Heart right ventricle (tissue), 16 donors: ENCODE measurements at regions of chr9 and their contacts with region 1.

Region 1: DNA sequence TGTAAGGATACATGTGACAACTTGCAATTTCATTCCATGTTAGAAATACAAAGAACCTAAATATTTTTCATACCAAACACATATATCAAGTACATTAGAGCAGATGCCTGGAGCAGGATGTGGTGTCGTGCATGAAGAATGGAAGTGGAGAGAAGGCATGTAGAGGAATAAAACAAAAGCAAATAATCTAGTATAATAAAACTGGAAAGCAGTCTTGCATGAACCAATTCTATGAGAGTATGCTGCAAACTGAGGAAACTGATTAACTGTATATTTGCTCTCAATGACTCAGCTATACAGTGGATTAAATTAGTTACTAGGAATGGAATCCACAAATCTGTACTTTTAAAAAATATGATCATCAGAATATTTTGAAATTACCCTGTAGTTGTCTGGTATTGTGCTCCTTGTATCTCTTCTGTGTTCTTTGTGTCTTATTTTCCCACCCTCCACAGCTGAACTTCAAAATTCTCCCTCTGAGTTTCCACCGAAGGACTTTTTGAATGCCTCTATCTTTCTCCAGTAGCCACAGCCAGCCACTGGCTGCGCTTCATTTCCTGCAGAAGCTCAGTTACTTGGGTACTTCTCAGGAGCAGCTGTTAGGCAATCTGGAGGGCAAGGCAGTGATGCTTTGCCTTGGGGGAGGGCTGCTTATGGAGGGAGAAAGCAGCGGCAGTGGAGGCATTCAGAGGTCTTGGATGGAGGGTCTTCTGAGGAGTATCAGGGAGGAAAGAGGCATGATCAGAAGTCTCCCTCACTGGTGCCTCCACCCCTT is 608.0 kb downstream of the BRINP1 start:
- DNase-seq: no peak
- ATAC-seq: no peak
- H3K4me3 ChIP-seq: no peak overlapping the region
- H3K27ac ChIP-seq: no peak overlapping the region
- H3K4me1 ChIP-seq: no peaks in the 10 kb centered on the region
- H3K27me3 ChIP-seq: no peaks in the 10 kb centered on the region
- CTCF ChIP-seq: no peak

Region 2: GRCh38 chr9:117092582-117092981 is 1668.6 kb before region 1 on chr9:
- intact Hi-C with region 1: loop called in 1 of 10 experiments (anchors 10 kb)
- DNase-seq: no peak
- ATAC-seq: no peak
- H3K4me3 ChIP-seq: no peak overlapping the region
- H3K27ac ChIP-seq: no peak overlapping the region
- H3K4me1 ChIP-seq: peaks cover 0 to 6% (median 0%) of the 10 kb centered on the region in 9 donors
- H3K27me3 ChIP-seq: no peaks in the 10 kb centered on the region
- CTCF ChIP-seq: no peak

Region 3: GRCh38 chr9:118586978-118587377 is 174.2 kb before region 1 on chr9:
- intact Hi-C with region 1: no loop called
- DNase-seq: no peak
- ATAC-seq: no peak
- H3K4me3 ChIP-seq: no peak overlapping the region
- H3K27ac ChIP-seq: no peak overlapping the region
- H3K4me1 ChIP-seq: no peaks in the 10 kb centered on the region
- H3K27me3 ChIP-seq: peaks cover 0 to 3% (median 0%) of the 10 kb centered on the region in 7 donors
- CTCF ChIP-seq: no peak

Region 4: DNA sequence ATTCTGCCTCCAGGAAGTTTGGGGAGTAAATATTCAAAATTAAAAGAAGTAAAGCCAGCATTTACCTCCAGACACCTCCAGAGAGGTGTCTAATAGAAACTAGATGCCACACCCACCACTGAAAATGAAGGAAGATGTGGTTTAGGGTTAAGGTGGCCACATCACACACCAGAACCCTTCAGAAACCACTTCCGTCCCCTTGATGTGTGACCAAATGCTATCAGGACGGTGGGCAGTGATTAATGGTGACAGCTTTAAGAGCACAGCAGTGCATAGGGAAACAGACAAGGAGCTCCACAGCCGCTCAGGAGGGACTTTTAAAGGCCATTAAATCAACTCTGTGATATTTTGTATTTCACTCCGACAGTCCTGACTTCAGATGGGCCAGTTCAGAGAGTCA is 312.8 kb after region 1 on chr9:
- intact Hi-C with region 1: no loop called
- DNase-seq: no peak
- ATAC-seq: no peak
- H3K4me3 ChIP-seq: no peak overlapping the region
- H3K27ac ChIP-seq: no peak overlapping the region
- H3K4me1 ChIP-seq: no peaks in the 10 kb centered on the region
- H3K27me3 ChIP-seq: no peaks in the 10 kb centered on the region
- CTCF ChIP-seq: no peak